Mammary epithelial cell (primary cell): ENCODE measurements at regions of chr18 and their contacts with region 1.

Region 1: GRCh38 chr18:79964330-79965118 is at the start of gene HSBP1L1:
- DNase-seq: peak; percentile 48
- H3K4me3 ChIP-seq: peak within 1 kb of the TSS; percentile 65 to 82 (median 72)
- H3K27ac ChIP-seq: peak within 1 kb of the TSS; percentile 71
- H3K4me1 ChIP-seq: peaks cover 54% of the 10 kb centered on the region
- H3K27me3 ChIP-seq: no peaks in the 10 kb centered on the region
- CTCF ChIP-seq: peak in 1 of 2 donors; percentile 38
- total RNA-seq, gene HSBP1L1: 14.2 to 33.8 TPM

Region 2: GRCh38 chr18:78511666-78512601 is 1452.6 kb before region 1 on chr18:
- CTCF ChIA-PET with region 1: no interaction called
- dilution Hi-C with region 1: no loop called
- in situ Hi-C with region 1: no loop called
- intact Hi-C with region 1: no loop called
- DNase-seq: no peak
- H3K4me3 ChIP-seq: no peak overlapping the region
- H3K27ac ChIP-seq: no peak overlapping the region
- H3K4me1 ChIP-seq: no peaks in the 10 kb centered on the region
- H3K27me3 ChIP-seq: no peaks in the 10 kb centered on the region
- CTCF ChIP-seq: no peak

Region 3: DNA sequence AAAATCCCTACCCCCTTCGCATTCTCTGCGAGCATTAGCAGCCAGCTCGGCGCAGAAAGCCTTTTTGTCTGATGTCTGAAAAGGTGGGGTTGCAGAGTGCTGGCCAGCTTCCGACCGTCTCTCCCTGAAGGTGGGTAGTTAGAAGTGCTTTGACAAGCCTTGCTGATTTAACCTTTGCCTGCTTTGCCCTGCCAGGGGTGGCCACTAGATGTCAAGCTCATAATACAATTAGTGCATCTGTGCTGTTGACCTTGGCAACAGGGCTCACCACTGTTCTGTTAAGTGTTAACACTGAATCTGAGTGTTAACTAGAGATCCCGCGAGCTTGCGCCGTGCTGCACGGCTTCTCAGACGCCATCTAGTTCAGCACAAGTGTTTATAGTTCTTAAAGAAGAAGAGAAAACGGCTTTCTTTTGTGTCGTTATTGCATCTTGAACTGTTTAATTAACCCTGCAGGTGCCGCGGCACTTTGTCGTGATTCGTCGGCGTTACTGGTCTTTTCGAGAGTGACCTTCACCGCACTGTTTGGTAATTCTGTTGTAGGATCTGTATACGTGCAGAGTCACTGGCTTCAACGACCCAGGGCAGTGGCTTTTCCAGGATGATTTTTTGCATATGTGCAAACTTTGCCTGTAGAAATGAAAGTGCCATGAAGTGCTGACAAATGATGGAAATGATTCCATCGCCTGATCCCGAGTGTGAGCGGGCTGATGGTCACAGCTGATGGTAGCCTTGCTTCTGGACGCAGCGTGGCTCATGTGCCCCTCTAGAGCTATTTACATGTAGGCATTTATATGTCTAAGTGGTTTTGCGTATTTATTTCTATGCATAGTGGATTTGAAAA is 979.4 kb before region 1 on chr18:
- CTCF ChIA-PET with region 1: no interaction called
- dilution Hi-C with region 1: no loop called
- in situ Hi-C with region 1: no loop called
- intact Hi-C with region 1: loop called (anchors 5 kb)
- DNase-seq: peak; percentile 29
- H3K4me3 ChIP-seq: no peak overlapping the region
- H3K27ac ChIP-seq: no peak overlapping the region
- H3K4me1 ChIP-seq: no peaks in the 10 kb centered on the region
- H3K27me3 ChIP-seq: peaks cover 26% of the 10 kb centered on the region
- CTCF ChIP-seq: peak; percentile 38 to 63

Region 4: DNA sequence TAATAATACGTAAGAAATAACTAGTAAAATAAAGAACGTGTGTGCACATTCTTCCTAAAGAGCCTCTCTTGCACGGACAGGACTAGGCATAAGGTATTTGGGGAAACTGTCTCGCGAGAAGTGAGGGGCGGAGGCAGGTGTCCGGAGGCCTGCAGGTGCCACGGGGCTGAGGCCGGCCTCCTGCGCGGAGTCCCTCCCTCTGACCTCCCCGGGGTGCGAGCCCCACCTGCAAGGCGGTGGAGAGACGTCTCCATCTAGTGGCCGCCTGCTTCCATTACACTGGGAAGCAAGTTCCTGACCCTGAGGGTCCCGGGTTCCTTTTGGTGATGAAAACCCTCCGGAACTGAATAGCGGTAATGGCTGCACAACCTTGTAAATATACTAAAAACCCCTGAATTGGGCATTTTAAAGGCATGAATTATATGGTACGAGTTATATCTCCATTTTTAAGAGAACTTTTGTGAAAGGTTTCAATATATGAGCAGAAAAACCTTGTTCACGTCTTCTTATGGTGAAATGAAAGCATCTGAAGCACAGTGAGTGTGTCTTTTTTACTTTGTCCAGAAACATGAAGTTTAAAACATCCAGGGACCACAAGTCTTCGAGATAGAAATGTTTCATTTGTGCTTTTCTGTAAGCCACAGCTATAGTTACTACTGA is 320.4 kb before region 1 on chr18:
- CTCF ChIA-PET with region 1: no interaction called
- dilution Hi-C with region 1: no loop called
- in situ Hi-C with region 1: no loop called
- intact Hi-C with region 1: loop called (anchors 1 kb)
- DNase-seq: peak; percentile 32
- H3K4me3 ChIP-seq: no peak overlapping the region
- H3K27ac ChIP-seq: no peak overlapping the region
- H3K4me1 ChIP-seq: no peaks in the 10 kb centered on the region
- H3K27me3 ChIP-seq: no peaks in the 10 kb centered on the region
- CTCF ChIP-seq: peak; percentile 77 to 96

Region 5: GRCh38 chr18:79679111-79679872 is 285.2 kb before region 1 on chr18 and contains the start of gene CTDP1:
- CTCF ChIA-PET with region 1: no interaction called
- dilution Hi-C with region 1: no loop called
- in situ Hi-C with region 1: no loop called
- intact Hi-C with region 1: loop called (anchors 2 kb)
- DNase-seq: peak; percentile 99
- H3K4me3 ChIP-seq: peak within 1 kb of the TSS; percentile 84 to 98 (median 98)
- H3K27ac ChIP-seq: peak within 1 kb of the TSS; percentile 94
- H3K4me1 ChIP-seq: peaks cover 22% of the 10 kb centered on the region
- H3K27me3 ChIP-seq: no peaks in the 10 kb centered on the region
- CTCF ChIP-seq: no peak
- total RNA-seq, gene CTDP1: 20.7 to 23.5 TPM

Region 6: DNA sequence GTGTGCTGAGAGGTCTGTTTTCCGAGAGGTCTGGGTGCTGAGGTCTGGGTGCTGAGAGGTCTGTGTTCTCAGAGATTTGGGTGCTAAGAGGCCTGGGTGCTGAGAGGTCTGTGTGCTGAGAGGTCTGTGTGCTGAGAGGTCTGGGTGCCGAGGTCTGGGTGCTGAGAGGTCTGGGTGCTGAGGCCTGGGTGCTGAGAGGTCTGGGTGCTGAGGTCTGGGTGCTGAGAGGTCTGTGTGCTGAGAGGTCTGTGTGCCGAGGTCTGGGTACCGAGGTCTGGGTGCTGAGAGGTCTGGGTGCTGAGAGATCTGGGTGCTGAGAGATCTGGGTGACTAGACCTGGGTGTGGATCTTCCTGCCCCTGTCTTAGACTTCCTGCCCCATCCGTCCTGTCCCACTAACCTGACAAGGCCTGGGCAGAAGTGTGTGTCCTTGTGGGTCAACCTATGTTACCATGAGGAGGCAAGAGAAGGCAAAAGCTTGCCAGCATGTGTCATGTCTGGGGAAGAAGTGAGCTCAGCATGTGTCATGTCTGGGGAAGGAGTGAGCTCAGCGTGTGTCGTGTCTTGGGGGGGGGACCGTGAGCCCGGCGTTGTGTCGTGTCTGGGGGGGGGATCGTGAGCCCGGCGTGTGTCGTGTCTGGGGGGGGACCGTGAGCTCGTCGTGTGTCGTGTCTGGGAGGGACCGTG is 97.5 kb before region 1 on chr18:
- CTCF ChIA-PET with region 1: no interaction called
- dilution Hi-C with region 1: no loop called
- in situ Hi-C with region 1: no loop called
- intact Hi-C with region 1: no loop called
- DNase-seq: peak; percentile 7
- H3K4me3 ChIP-seq: no peak overlapping the region
- H3K27ac ChIP-seq: no peak overlapping the region
- H3K4me1 ChIP-seq: no peaks in the 10 kb centered on the region
- H3K27me3 ChIP-seq: no peaks in the 10 kb centered on the region
- CTCF ChIP-seq: no peak

Region 7: GRCh38 chr18:79877214-79878091 is 87.1 kb before region 1 on chr18:
- CTCF ChIA-PET with region 1: no interaction called
- dilution Hi-C with region 1: no loop called
- in situ Hi-C with region 1: no loop called
- intact Hi-C with region 1: loop called (anchors 2 kb)
- DNase-seq: no peak
- H3K4me3 ChIP-seq: no peak overlapping the region
- H3K27ac ChIP-seq: no peak overlapping the region
- H3K4me1 ChIP-seq: peaks cover 11% of the 10 kb centered on the region
- H3K27me3 ChIP-seq: peaks cover 3% of the 10 kb centered on the region
- CTCF ChIP-seq: no peak

Region 8: GRCh38 chr18:80157708-80158343 is 193.3 kb after region 1 on chr18:
- CTCF ChIA-PET with region 1: no interaction called
- dilution Hi-C with region 1: no loop called
- in situ Hi-C with region 1: no loop called
- intact Hi-C with region 1: loop called (anchors 2 kb)
- DNase-seq: peak; percentile 48
- H3K4me3 ChIP-seq: no peak overlapping the region
- H3K27ac ChIP-seq: no peak overlapping the region
- H3K4me1 ChIP-seq: no peaks in the 10 kb centered on the region
- H3K27me3 ChIP-seq: no peaks in the 10 kb centered on the region
- CTCF ChIP-seq: peak; percentile 97 to 99